Astrocyte of the cerebellum (primary cell): ENCODE measurements at regions of chr12 and their contacts with region 1.

Region 1: DNA sequence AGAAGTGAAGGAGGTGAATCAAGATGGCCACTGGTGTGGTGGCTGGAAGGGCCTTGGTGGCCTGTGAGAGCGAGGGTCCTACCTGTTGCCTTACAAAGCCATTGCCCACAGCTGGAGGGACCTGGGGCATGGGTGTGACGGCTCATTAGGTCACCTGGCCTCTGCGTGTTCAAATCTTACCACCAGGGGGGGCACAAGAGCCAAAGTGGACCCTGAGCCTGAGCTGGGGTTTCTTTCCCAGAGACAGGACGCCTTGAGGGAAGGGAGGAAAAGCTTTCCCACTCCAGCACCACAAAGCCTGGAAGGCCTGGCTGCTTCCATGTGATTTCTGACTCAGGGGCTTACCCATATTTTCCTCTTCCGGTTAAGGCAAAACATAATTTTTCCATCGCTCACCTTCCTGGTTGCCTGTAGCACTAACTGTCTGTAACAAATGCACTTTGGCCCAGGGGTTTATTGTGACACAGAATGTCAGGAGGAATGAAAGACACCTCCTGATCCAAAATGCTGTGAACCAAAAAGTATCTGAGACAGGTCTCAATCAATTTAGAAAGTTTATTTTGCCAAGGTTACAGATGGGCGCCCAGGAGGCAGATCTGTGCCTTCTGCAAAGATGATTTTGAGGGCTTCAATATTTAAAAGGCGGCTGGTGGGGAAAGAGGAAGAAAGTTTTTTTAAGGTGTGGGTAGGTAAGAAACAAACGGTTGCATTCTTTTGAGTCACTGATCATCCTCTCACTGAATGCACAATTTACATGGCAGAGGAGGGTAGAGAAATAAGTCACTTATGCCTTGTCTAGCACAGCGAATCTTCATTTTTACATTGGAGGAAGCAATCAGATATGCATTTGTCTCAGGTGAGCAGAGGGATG is 4.3 kb upstream of the CD9 start:
- DNase-seq: peak; percentile 77
- H3K4me3 ChIP-seq: no peak overlapping the region
- CTCF ChIP-seq: peak; percentile 93

Region 2: DNA sequence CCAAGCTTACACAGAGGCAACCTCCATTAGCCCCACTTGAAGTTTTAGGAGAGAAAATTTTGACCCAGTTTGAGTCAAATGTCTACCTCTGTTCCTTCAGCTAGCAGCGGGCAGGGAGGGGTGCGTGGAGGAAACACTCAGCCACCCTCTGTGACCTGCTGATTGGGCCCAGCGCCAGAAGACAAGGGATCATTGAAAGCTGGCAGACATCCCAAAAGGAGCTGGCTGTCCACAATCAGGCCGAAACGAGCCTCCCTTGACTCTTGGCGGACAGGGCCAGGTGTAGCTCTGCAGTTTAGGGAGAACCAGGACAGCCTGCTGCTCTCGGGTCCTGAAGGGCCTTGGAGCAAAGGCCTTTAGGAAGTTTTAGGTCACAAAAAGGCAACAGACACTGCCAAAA is 45.6 kb after region 1 on chr12:
- in situ Hi-C with region 1: loop called (anchors 5 kb)
- DNase-seq: no peak
- H3K4me3 ChIP-seq: no peak overlapping the region
- CTCF ChIP-seq: no peak